Activated CD4-positive, alpha-beta T cell treated with anti-CD3 and anti-CD28 coated beads, Interleukin-2, amount 10 ng/mL, durations not matched to agents 24 days and 14 days (primary cell): ENCODE measurements at regions of chr6 and their contacts with region 1.

Region 1: DNA sequence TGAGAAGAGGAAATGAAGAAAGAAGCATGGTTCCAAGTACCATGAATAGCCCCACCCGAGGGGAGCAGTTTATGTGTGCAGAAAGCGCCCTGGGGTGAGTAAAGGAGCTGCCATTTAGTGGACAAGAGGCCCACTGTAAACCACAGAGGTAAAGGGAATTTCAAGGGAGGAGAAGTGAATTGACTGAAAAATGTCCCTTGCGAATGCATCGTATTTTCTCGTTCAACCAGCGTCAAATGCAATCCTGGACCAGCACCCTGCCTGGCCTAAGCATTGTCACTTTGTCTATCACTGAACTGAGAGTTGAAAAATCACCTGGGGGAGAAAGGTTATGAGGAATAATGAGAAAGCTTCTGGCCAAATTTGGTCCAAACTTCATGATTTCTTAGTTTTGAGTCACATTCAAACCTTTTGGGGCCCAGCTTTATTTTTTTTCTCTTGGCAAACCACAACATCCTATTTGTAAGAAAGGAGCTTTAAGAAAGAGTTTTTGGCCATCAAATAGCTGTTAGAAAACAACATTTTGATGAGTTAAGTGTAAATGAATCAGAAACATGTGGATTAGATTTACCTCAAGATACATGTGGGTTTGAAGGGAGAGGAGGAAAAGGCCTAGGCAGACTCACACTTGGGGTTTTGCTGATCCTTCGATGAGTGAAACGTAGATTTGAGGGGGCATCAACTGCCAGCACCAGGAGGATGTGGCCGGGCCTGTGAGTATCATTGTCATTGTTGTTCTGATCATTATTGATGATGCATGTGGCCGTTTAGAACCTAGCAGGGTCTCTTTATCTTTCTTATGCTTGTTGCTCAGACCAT is 214.0 kb downstream of the CLIC5 start:
- DNase-seq: peak; percentile 78
- H3K4me3 Mint-ChIP-seq: peak overlapping the region; percentile 28
- H3K27ac Mint-ChIP-seq: peak overlapping the region; percentile 86
- H3K4me1 Mint-ChIP-seq: peaks cover 21% of the 10 kb centered on the region
- H3K27me3 Mint-ChIP-seq: no peaks in the 10 kb centered on the region

Region 2: GRCh38 chr6:45377554-45378333 is 423.9 kb before region 1 on chr6 and contains the start of gene SUPT3H:
- intact Hi-C with region 1: loop called (anchors 5 kb)
- DNase-seq: peak; percentile 97
- H3K4me3 Mint-ChIP-seq: peak within 1 kb of the TSS; percentile 99
- H3K27ac Mint-ChIP-seq: peak within 1 kb of the TSS; percentile 100
- H3K4me1 Mint-ChIP-seq: peaks cover 25% of the 10 kb centered on the region
- H3K27me3 Mint-ChIP-seq: no peaks in the 10 kb centered on the region
- total RNA-seq, gene SUPT3H: 12.4 and 13.0 TPM in 2 replicates

Region 3: DNA sequence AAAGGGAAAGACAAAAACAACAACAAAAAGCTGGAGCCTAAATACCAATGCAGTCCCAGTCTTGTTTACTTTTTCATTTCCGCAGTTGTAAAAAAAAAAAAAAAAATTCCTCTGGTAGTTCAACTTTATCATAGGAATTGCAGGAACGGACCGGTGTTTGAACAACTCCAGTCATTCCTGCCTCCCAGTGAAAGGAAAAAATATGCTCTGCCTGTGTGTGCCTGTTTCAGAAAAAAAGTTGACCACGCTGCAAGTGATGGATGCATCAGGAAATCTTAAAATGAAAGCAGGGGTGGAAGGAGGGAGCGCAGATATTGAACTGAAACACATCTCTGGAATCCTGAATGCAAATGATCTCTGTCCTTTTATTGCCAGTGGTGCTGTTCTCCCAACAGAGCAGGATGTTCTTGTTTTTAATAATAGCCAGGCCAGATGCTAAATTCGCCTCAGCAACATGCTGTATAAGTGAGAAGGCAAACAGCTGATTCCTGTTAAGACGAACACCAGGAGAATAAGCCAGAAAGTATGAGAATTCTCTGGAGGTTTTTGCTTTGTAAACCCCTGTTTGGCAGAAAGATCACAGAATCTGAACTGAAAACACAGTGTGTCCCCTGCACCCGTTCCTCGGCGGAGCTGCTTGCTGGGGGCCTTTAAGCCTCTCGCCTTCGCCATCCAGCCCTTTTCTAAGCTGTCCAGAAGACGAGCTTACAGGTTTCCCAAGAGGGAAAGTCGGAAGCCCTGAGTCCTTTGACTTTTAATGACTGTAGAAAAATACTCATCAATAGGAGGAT is 245.5 kb before region 1 on chr6:
- intact Hi-C with region 1: loop called (anchors 10 kb)
- DNase-seq: no peak
- H3K4me3 Mint-ChIP-seq: no peak overlapping the region
- H3K27ac Mint-ChIP-seq: no peak overlapping the region
- H3K4me1 Mint-ChIP-seq: peaks cover 41% of the 10 kb centered on the region
- H3K27me3 Mint-ChIP-seq: no peaks in the 10 kb centered on the region

Region 4: GRCh38 chr6:45626087-45626891 is 175.4 kb before region 1 on chr6:
- intact Hi-C with region 1: loop called (anchors 2 kb)
- DNase-seq: no peak
- H3K4me3 Mint-ChIP-seq: peak overlapping the region; percentile 3
- H3K27ac Mint-ChIP-seq: peak overlapping the region; percentile 82
- H3K4me1 Mint-ChIP-seq: peaks cover 39% of the 10 kb centered on the region
- H3K27me3 Mint-ChIP-seq: no peaks in the 10 kb centered on the region

Region 5: DNA sequence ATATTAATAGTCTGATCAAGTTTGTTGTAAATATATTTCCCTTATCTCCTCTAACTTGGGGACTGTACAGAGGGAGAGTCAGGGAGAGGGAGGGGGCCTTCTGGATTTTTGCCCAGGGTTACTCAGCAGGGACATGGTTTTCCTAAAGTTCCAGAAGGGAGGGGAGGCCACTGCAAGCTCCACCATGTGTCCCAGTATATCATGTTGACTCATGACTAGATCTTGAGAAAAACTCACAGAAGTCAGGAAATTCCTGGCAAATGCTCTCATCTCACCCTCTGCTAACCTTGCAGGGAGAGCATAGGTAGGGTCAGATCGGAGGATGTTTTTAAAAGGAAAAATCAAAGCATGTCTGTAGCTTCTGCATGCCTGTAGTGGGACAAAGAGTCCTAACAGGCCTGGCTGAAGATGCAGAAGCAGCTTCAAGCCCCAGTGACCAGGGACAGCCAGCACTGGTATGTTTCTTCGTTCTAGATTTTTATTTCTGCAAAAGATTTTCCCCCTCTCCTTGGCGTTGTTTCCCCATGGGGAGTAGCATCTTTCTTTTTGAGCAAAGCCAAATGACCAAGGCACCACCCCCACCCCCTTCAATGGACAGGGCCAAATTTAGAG is 151.1 kb before region 1 on chr6:
- intact Hi-C with region 1: no loop called
- DNase-seq: no peak
- H3K4me3 Mint-ChIP-seq: no peak overlapping the region
- H3K27ac Mint-ChIP-seq: no peak overlapping the region
- H3K4me1 Mint-ChIP-seq: peaks cover 14% of the 10 kb centered on the region
- H3K27me3 Mint-ChIP-seq: peaks cover 5% of the 10 kb centered on the region

Region 6: GRCh38 chr6:45813943-45814342 is 12.3 kb after region 1 on chr6:
- intact Hi-C with region 1: loop called (anchors 1 kb)
- DNase-seq: no peak
- H3K4me3 Mint-ChIP-seq: peak overlapping the region; percentile 6
- H3K27ac Mint-ChIP-seq: peak overlapping the region; percentile 61
- H3K4me1 Mint-ChIP-seq: peaks cover 26% of the 10 kb centered on the region
- H3K27me3 Mint-ChIP-seq: no peaks in the 10 kb centered on the region

Region 7: GRCh38 chr6:45830441-45831139 is 28.9 kb after region 1 on chr6:
- intact Hi-C with region 1: loop called (anchors 2 kb)
- DNase-seq: peak; percentile 82
- H3K4me3 Mint-ChIP-seq: peak overlapping the region; percentile 76
- H3K27ac Mint-ChIP-seq: peak overlapping the region; percentile 91
- H3K4me1 Mint-ChIP-seq: peaks cover 38% of the 10 kb centered on the region
- H3K27me3 Mint-ChIP-seq: no peaks in the 10 kb centered on the region